ENCODE measurements at regions of chr9 and their contacts with region 1.

Region 1: DNA sequence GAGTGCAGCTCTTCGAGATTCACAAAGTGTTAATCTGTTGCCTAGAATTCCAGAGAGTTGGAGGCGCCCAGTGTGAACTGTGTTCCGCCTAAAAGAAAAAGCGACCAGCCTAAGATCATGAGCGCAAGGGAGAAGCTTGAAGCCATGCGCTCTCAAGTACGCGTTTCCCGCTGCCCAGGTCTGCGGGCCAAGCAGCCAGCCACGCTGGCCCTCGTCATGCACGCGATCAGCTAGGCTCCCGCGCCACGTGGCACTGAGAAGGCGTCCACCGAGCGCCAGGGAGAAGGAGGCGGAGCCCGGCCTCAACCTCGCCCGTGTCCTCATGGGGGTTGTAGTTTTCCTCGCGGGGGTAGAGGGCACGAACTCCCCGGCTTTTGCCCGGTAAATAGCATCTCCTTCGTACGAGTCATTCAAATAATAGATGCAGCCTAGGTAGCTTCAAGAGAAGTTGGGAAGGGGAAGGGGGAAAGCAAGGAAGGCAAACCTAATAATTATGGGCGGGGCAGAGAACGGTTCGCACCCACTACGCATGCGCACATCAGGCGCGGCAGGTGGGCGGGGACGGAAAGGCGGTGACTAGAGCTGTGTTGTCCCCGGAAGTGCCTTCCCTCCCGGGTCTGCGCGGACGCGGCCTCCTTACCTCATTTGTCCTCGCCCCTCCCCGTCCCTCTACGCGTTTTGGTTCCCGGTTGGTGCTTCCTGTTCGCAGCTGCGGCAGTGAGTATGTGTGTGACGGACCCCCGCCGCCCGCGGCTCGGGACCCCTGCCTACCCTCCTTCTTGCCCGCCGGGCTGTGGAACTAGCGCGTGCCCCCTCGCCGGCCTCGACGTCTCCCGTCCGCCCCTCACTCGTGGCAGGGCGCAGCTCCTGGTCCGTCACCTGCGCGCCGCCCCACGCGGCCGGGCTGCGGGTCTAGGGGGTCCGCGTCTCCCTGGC is at the start of gene ZCCHC7:
- DNase-seq: peak; percentile 97
- H3K4me3 ChIP-seq: peak within 1 kb of the TSS; percentile 75
- H3K4me3 Mint-ChIP-seq: peak within 1 kb of the TSS; percentile 81
- H3K27ac Mint-ChIP-seq: peak within 1 kb of the TSS; percentile 93
- H3K4me1 ChIP-seq: no peaks in the 10 kb centered on the region
- H3K4me1 Mint-ChIP-seq: peaks cover 12% of the 10 kb centered on the region
- H3K27me3 ChIP-seq: no peaks in the 10 kb centered on the region
- H3K27me3 Mint-ChIP-seq: no peaks in the 10 kb centered on the region
- CTCF ChIP-seq: no peak
- total RNA-seq, gene ZCCHC7: 22.0 and 23.2 TPM in 2 replicates

Region 2: DNA sequence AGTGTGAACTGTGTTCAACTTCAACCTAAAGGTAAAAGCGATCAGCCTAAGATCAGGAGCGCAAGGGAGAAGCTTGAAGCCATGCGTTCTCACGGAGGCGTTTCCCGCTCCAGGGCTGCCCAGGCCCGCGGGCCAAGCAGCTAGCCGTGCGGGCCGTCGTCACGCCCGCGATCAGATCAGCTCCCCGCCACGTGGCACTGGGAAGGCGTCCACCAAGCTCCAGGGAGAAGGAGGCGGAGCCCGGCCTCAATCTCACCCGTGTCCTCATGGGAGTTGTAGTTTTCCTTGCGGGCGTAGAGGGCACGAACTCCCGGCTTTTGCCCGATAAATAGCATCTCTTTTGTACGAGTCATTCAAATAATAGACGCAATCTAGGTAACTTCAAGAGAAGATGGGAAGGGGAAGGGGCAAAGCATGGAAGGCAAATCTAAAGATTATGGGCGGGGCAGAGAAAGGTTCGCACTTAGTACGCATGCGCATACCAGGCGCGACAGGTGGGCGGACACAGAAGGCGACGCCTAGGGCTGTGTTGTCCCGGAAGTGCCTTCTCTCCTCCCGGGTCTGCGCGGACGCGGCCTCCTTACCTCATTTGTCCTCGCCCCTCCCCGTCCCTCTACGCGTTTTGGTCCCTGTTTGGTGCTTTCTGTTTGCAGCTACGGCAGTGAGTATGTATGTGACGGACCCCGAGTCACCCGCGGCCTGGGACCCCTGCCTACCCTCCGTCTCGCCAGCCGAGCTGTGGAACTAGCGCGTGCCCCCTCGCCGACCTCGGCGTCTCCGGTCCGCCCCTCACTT is 40.6 kb before region 1 on chr9:
- CTCF ChIA-PET with region 1: interaction called, 9 read pairs
- POLR2A ChIA-PET with region 1: interaction called, 34 read pairs
- intact Hi-C with region 1: loop called (anchors 1 kb)
- DNase-seq: peak; percentile 95 to 96
- H3K4me3 ChIP-seq: peak overlapping the region; percentile 78
- H3K4me3 Mint-ChIP-seq: peak overlapping the region; percentile 82
- H3K27ac Mint-ChIP-seq: peak overlapping the region; percentile 85
- H3K4me1 ChIP-seq: peaks cover 7% of the 10 kb centered on the region; the same call in 1 of the 2 replicates
- H3K4me1 Mint-ChIP-seq: peaks cover 8% of the 10 kb centered on the region
- H3K27me3 ChIP-seq: no peaks in the 10 kb centered on the region
- H3K27me3 Mint-ChIP-seq: no peaks in the 10 kb centered on the region
- CTCF ChIP-seq: no peak

Region 3: GRCh38 chr9:37141015-37141414 is 20.8 kb after region 1 on chr9:
- CTCF ChIA-PET with region 1: interaction called, 3 read pairs
- POLR2A ChIA-PET with region 1: interaction called, 17 read pairs
- intact Hi-C with region 1: no loop called
- DNase-seq: no peak
- H3K4me3 ChIP-seq: no peak overlapping the region
- H3K4me3 Mint-ChIP-seq: no peak overlapping the region
- H3K27ac Mint-ChIP-seq: no peak overlapping the region
- H3K4me1 ChIP-seq: no peaks in the 10 kb centered on the region; the same call in 1 of the 2 replicates
- H3K4me1 Mint-ChIP-seq: no peaks in the 10 kb centered on the region
- H3K27me3 ChIP-seq: no peaks in the 10 kb centered on the region
- H3K27me3 Mint-ChIP-seq: no peaks in the 10 kb centered on the region
- CTCF ChIP-seq: no peak

Region 4: DNA sequence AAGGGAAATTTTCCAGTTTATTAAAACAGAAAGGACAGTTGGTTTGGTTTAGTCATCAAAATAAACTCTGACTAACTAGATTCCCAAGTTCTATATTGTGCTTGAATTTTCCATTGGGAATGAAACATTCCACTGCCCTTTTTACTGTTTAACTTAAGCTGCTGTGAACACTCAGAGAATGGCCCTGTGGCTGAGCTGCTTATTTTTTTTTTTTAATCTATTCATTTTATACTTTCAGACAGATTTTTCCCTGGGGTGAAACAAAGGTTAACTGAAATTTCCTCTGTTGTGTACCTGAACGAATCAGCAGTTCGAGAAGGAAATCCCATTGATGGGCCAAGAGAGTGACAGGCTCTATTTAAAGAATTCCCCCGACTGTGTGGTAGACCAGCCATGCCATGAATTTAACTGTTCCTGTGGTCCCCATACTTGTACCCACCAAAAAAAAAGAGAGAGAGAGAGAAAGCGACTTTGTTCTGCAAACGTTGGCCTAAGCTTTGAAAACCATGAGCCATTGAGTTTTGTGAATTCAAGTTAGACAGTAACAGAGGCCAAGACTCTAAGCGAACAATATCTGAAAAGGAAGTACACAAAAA is 163.7 kb after region 1 on chr9:
- CTCF ChIA-PET with region 1: no interaction called
- POLR2A ChIA-PET with region 1: no interaction called
- intact Hi-C with region 1: no loop called
- DNase-seq: no peak
- H3K4me3 ChIP-seq: no peak overlapping the region
- H3K4me3 Mint-ChIP-seq: no peak overlapping the region
- H3K27ac Mint-ChIP-seq: no peak overlapping the region
- H3K4me1 ChIP-seq: no peaks in the 10 kb centered on the region
- H3K4me1 Mint-ChIP-seq: peaks cover 6% of the 10 kb centered on the region
- H3K27me3 ChIP-seq: no peaks in the 10 kb centered on the region
- H3K27me3 Mint-ChIP-seq: no peaks in the 10 kb centered on the region
- CTCF ChIP-seq: no peak

Region 5: GRCh38 chr9:37329576-37329975 is 209.4 kb after region 1 on chr9:
- CTCF ChIA-PET with region 1: no interaction called
- POLR2A ChIA-PET with region 1: interaction called, 5 read pairs
- intact Hi-C with region 1: loop called (anchors 2 kb)
- DNase-seq: peak in 1 of 2 experiments; percentile 20
- H3K4me3 ChIP-seq: no peak overlapping the region
- H3K4me3 Mint-ChIP-seq: no peak overlapping the region
- H3K27ac Mint-ChIP-seq: no peak overlapping the region
- H3K4me1 ChIP-seq: peaks cover 28% of the 10 kb centered on the region
- H3K4me1 Mint-ChIP-seq: peaks cover 10% of the 10 kb centered on the region
- H3K27me3 ChIP-seq: no peaks in the 10 kb centered on the region
- H3K27me3 Mint-ChIP-seq: no peaks in the 10 kb centered on the region
- CTCF ChIP-seq: peak; percentile 19

Measured in Caco-2 (cell line).